ENCODE measurements at regions of chr9 and their contacts with region 1.

Region 1: GRCh38 chr9:2620919-2621679 is 488 bp upstream of the VLDLR start:
- DNase-seq: peak; percentile 89
- H3K4me3 Mint-ChIP-seq: peak overlapping the region; percentile 78
- H3K27ac Mint-ChIP-seq: peak overlapping the region; percentile 65
- H3K4me1 Mint-ChIP-seq: peaks cover 12% of the 10 kb centered on the region
- H3K27me3 Mint-ChIP-seq: peaks cover 62% of the 10 kb centered on the region

Region 2: GRCh38 chr9:2158111-2158610 is 462.9 kb before region 1 on chr9:
- CTCF ChIA-PET with region 1: no interaction called
- intact Hi-C with region 1: loop called (anchors 10 kb)
- DNase-seq: peak; percentile 66
- H3K4me3 Mint-ChIP-seq: peak overlapping the region; percentile 80
- H3K27ac Mint-ChIP-seq: peak overlapping the region; percentile 94
- H3K4me1 Mint-ChIP-seq: peaks cover 58% of the 10 kb centered on the region
- H3K27me3 Mint-ChIP-seq: no peaks in the 10 kb centered on the region

Region 3: DNA sequence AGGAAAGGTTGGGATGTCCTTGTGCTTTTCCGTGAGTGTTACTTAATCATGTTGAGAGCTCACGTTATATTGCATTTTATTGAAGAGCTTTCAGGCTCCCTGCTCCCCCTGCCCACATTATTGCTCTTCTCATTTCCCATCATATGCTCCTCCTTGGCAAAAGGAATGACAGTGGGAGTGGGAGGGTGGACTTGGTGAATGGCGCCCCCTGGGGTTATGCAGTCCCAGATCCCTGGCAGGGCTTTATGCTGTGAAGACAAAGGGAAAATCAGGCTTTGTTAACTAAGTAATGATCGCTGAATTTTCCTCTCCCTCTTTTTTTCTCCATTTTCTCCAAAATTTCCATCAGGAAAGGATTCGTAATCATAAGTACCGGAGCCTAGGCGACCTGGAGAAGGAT is 439.3 kb before region 1 on chr9:
- CTCF ChIA-PET with region 1: no interaction called
- intact Hi-C with region 1: loop called (anchors 10 kb)
- DNase-seq: peak; percentile 37
- H3K4me3 Mint-ChIP-seq: no peak overlapping the region
- H3K27ac Mint-ChIP-seq: no peak overlapping the region
- H3K4me1 Mint-ChIP-seq: peaks cover 6% of the 10 kb centered on the region
- H3K27me3 Mint-ChIP-seq: no peaks in the 10 kb centered on the region

Region 4: GRCh38 chr9:2241836-2242741 is 379.0 kb before region 1 on chr9:
- CTCF ChIA-PET with region 1: no interaction called
- intact Hi-C with region 1: loop called (anchors 10 kb)
- DNase-seq: peak; percentile 76
- H3K4me3 Mint-ChIP-seq: peak overlapping the region; percentile 73
- H3K27ac Mint-ChIP-seq: no peak overlapping the region
- H3K4me1 Mint-ChIP-seq: peaks cover 10% of the 10 kb centered on the region
- H3K27me3 Mint-ChIP-seq: peaks cover 17% of the 10 kb centered on the region

Region 5: GRCh38 chr9:2610985-2611384 is 10.1 kb before region 1 on chr9:
- CTCF ChIA-PET with region 1: no interaction called
- intact Hi-C with region 1: no loop called
- DNase-seq: no peak
- H3K4me3 Mint-ChIP-seq: no peak overlapping the region
- H3K27ac Mint-ChIP-seq: no peak overlapping the region
- H3K4me1 Mint-ChIP-seq: no peaks in the 10 kb centered on the region
- H3K27me3 Mint-ChIP-seq: peaks cover 22% of the 10 kb centered on the region

Region 6: DNA sequence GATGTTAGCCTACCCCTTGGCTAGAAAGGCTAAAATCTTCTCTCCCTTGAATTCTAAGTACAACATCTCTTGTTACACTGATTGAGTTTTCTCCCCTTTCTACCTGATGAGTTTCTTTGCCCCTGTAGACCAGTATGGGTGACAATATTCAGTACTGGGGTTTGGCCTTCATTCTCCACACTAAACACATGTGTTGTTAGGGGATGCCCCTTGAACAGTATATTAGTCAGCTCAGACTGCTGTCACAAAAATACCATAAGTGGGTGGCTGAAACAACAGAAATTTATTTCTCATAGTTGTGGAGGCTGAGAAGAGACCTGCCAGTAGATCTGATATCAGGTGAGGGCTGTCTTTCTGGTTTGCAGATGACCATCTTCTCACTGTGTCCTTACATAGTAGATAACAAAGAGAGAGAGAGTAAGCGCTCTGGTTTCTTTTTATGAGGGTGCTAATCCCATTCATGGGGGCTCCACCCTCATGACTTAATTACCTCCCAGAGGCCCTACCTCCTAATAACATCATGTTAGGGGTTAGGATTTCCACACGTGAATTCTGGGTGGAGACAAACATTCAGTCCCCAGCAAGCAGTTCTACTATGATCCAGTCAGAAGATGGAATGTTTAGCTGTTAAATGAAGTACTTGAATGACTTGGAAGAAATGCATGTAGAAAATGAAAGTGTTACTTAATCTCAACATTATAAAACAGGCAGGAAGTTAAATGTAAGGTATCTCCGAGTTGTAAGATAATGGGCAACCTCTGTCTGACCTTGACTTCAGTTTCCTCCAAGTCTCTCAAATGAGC is 18.0 kb after region 1 on chr9:
- CTCF ChIA-PET with region 1: no interaction called
- intact Hi-C with region 1: loop called (anchors 1 kb)
- DNase-seq: peak; percentile 7
- H3K4me3 Mint-ChIP-seq: no peak overlapping the region
- H3K27ac Mint-ChIP-seq: no peak overlapping the region
- H3K4me1 Mint-ChIP-seq: peaks cover 9% of the 10 kb centered on the region
- H3K27me3 Mint-ChIP-seq: peaks cover 20% of the 10 kb centered on the region

Region 7: GRCh38 chr9:2655411-2655901 is 34.4 kb after region 1 on chr9:
- CTCF ChIA-PET with region 1: no interaction called
- intact Hi-C with region 1: loop called (anchors 2 kb)
- DNase-seq: peak; percentile 42
- H3K4me3 Mint-ChIP-seq: no peak overlapping the region
- H3K27ac Mint-ChIP-seq: no peak overlapping the region
- H3K4me1 Mint-ChIP-seq: peaks cover 8% of the 10 kb centered on the region
- H3K27me3 Mint-ChIP-seq: no peaks in the 10 kb centered on the region

Region 8: DNA sequence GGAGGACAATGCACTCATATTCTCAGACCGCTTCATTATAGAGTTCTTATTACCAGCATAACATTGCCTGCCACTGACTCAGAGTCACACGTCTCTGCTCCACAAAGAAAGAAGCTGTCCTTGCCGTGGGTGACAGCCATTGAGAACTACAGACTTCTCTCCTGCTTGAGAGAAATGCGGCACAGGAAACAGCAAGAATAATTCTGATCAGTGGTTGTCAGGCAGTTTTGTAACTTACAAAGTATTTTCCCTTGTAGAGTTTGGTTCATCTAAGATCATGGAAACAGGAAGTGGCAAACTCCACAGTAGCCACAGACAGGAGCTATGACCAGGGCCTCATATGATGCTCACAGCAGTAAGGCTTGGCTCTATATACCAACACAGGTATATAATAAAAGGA is 143.3 kb after region 1 on chr9:
- CTCF ChIA-PET with region 1: no interaction called
- intact Hi-C with region 1: loop called (anchors 1 kb)
- DNase-seq: peak; percentile 37
- H3K4me3 Mint-ChIP-seq: no peak overlapping the region
- H3K27ac Mint-ChIP-seq: peak overlapping the region; percentile 82
- H3K4me1 Mint-ChIP-seq: peaks cover 23% of the 10 kb centered on the region
- H3K27me3 Mint-ChIP-seq: no peaks in the 10 kb centered on the region

Measured in activated naive CD4-positive, alpha-beta T cell treated with anti-CD3 and anti-CD28 coated beads for 36 hours (primary cell).